ENCODE measurements at regions of chr1 and their contacts with region 1.

Region 1: GRCh38 chr1:160083968-160084770 is 2.8 kb downstream of the KCNJ9 start:
- DNase-seq: peak; percentile 91
- CTCF ChIP-seq: peak; percentile 93

Region 2: DNA sequence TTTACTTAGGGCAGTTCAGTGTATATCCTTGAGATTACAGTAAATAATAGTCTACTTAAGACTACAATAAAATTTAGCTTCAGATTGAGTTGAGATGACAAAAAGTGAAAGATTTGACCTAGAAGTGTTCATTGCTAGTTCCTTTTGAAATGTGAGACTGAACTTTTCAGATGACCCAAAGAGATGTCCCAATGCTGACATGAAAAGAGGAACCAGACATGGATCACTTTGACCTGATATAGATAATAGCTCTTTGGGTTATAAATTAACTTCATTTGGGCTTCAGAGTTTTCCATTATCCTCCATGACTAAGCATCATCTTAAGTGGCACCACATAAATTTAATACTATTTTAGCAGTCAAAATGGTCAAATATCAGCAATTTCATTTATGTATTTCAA is 522.7 kb before region 1 on chr1:
- in situ Hi-C with region 1: no loop called
- DNase-seq: no peak
- CTCF ChIP-seq: no peak

Region 3: DNA sequence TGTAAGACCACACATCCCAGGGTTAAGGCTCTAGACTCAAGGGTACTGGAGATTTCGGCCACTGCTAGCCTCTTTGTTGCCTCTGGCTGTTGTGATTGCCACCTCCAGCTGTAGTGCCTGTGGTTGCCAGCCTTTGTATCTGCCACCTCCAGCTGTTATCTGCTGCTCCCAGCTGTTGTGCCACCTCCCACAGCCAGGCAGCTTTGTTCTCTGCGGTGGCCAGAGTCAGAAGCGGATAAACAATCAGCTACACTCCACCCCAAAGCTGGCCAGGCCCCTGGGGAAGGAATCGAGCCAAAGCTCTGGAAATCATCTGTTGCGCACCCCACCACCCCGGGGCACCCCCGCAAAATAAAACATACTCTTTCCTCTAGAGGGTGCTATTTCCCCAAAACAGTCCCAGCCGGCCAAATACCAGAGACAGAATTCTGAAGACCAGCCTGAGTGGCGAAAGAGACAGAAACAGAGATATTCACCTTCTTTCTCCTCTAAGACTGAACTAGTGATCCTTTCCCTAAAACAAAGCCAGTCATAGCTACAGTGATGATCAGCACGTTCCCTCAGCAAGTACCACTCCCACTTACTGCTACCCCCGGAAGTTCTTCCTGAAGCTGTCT is 37.6 kb before region 1 on chr1:
- in situ Hi-C with region 1: loop called (anchors 5 kb)
- DNase-seq: peak; percentile 75
- CTCF ChIP-seq: peak; percentile 71

Region 4: DNA sequence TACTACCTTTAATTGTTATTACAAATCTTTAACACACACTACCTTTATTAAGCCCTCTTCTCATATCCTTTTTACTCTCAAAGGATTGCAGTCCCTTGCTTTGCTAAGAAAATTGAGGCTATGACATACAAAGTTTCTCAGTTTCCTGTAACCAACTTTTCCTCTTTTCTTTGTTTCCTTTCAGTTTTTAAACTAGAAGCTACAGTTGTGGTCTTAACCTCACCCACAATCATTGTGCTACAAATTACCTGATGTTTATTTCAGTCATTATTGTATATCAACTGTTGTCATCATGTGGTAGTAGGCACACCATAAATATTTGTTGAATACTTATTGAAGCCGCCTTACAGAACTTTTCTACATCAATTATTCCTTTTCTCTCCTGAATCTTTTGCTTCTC is 387.1 kb after region 1 on chr1:
- in situ Hi-C with region 1: no loop called
- DNase-seq: no peak
- CTCF ChIP-seq: no peak